ENCODE measurements at regions of chr3 and their contacts with region 1.

Region 1: GRCh38 chr3:64533617-64534317 is 154.0 kb downstream of the ADAMTS9 start:
- DNase-seq: peak; percentile 87
- H3K4me3 Mint-ChIP-seq: no peak overlapping the region
- H3K27ac Mint-ChIP-seq: no peak overlapping the region
- H3K4me1 Mint-ChIP-seq: peaks cover 15% of the 10 kb centered on the region
- H3K27me3 Mint-ChIP-seq: no peaks in the 10 kb centered on the region
- CTCF ChIP-seq: peak; percentile 93

Region 2: DNA sequence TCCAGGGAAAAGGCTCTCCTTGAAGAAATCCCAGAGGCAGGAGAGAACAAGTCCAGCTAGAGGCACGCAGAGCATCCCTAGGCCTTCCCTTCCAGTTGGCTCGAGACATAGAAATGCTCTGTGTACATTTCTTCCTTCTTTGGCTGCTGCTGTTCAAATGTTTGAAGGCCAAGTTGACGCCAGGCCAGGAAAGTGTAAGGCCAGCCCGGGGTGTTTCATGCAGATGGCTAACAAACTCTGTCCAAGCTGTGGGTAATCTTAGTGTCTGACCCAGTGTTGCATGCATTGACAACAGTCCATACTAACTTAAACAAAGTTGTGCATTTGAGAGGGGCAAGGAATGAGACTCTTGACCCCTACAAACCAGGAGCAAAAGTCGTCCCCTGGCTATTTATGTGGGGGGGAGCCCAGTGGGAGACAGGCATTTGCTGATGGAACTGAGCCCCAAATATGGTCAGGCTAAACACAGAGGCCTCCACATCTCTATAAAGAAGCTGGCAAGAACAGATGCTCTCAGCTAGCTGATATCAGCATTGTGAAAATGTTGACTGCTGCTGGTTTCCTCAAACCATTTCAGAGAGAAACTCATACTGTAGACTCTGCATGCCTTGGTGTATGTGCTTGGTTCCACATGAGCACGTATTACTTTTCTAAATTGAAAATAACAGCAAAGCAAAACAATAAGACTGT is 14.6 kb after region 1 on chr3:
- CTCF ChIA-PET with region 1: interaction called, 18 read pairs
- POLR2A ChIA-PET with region 1: no interaction called
- intact Hi-C with region 1: no loop called
- DNase-seq: no peak
- H3K4me3 Mint-ChIP-seq: no peak overlapping the region
- H3K27ac Mint-ChIP-seq: no peak overlapping the region
- H3K4me1 Mint-ChIP-seq: no peaks in the 10 kb centered on the region
- H3K27me3 Mint-ChIP-seq: no peaks in the 10 kb centered on the region
- CTCF ChIP-seq: no peak

Region 3: GRCh38 chr3:64728428-64728827 is 194.7 kb after region 1 on chr3:
- CTCF ChIA-PET with region 1: interaction called, 6 read pairs
- POLR2A ChIA-PET with region 1: no interaction called
- intact Hi-C with region 1: loop called (anchors 10 kb)
- DNase-seq: no peak
- H3K4me3 Mint-ChIP-seq: no peak overlapping the region
- H3K27ac Mint-ChIP-seq: no peak overlapping the region
- H3K4me1 Mint-ChIP-seq: no peaks in the 10 kb centered on the region
- H3K27me3 Mint-ChIP-seq: no peaks in the 10 kb centered on the region
- CTCF ChIP-seq: no peak

Region 4: GRCh38 chr3:65342084-65342683 is 808.4 kb after region 1 on chr3:
- CTCF ChIA-PET with region 1: no interaction called
- POLR2A ChIA-PET with region 1: no interaction called
- intact Hi-C with region 1: loop called (anchors 5 kb)
- DNase-seq: peak; percentile 73
- H3K4me3 Mint-ChIP-seq: no peak overlapping the region
- H3K27ac Mint-ChIP-seq: no peak overlapping the region
- H3K4me1 Mint-ChIP-seq: no peaks in the 10 kb centered on the region
- H3K27me3 Mint-ChIP-seq: peaks cover 13% of the 10 kb centered on the region
- CTCF ChIP-seq: peak; percentile 68

Region 5: GRCh38 chr3:65672871-65673815 is 1139.4 kb after region 1 on chr3:
- CTCF ChIA-PET with region 1: interaction called, 18 read pairs
- POLR2A ChIA-PET with region 1: no interaction called
- intact Hi-C with region 1: loop called (anchors 2 kb)
- DNase-seq: peak; percentile 78
- H3K4me3 Mint-ChIP-seq: no peak overlapping the region
- H3K27ac Mint-ChIP-seq: no peak overlapping the region
- H3K4me1 Mint-ChIP-seq: peaks cover 9% of the 10 kb centered on the region
- H3K27me3 Mint-ChIP-seq: no peaks in the 10 kb centered on the region
- CTCF ChIP-seq: peak; percentile 64

Region 6: GRCh38 chr3:66195347-66195783 is 1661.6 kb after region 1 on chr3:
- CTCF ChIA-PET with region 1: no interaction called
- POLR2A ChIA-PET with region 1: no interaction called
- intact Hi-C with region 1: loop called (anchors 10 kb)
- DNase-seq: no peak
- H3K4me3 Mint-ChIP-seq: no peak overlapping the region
- H3K27ac Mint-ChIP-seq: no peak overlapping the region
- H3K4me1 Mint-ChIP-seq: no peaks in the 10 kb centered on the region
- H3K27me3 Mint-ChIP-seq: no peaks in the 10 kb centered on the region
- CTCF ChIP-seq: no peak

Measured in MCF 10A (cell line).